Psoas muscle (tissue), 8 donors: ENCODE measurements at regions of chr6 and their contacts with region 1.

Region 1: GRCh38 chr6:593139-593906 is 63.6 kb downstream of the HUS1B start:
- DNase-seq: no peak
- ATAC-seq: peak; percentile 64 to 82 (median 66)
- H3K4me3 ChIP-seq: no peak overlapping the region
- H3K27ac ChIP-seq: no peak overlapping the region
- H3K4me1 ChIP-seq: no peaks in the 10 kb centered on the region
- H3K27me3 ChIP-seq: no peaks in the 10 kb centered on the region
- CTCF ChIP-seq: peak; percentile 80

Region 2: GRCh38 chr6:340991-341827 is 252.1 kb before region 1 on chr6:
- intact Hi-C with region 1: no loop called
- DNase-seq: peak in 1 of 2 donors; percentile 52
- ATAC-seq: peak in 1 of 4 donors; percentile 6
- H3K4me3 ChIP-seq: no peak overlapping the region
- H3K27ac ChIP-seq: no peak overlapping the region
- H3K4me1 ChIP-seq: peaks cover 21% of the 10 kb centered on the region
- H3K27me3 ChIP-seq: no peaks in the 10 kb centered on the region
- CTCF ChIP-seq: no peak

Region 3: GRCh38 chr6:474453-475185 is 118.7 kb before region 1 on chr6:
- intact Hi-C with region 1: no loop called
- DNase-seq: no peak
- ATAC-seq: no peak
- H3K4me3 ChIP-seq: no peak overlapping the region
- H3K27ac ChIP-seq: no peak overlapping the region
- H3K4me1 ChIP-seq: no peaks in the 10 kb centered on the region
- H3K27me3 ChIP-seq: no peaks in the 10 kb centered on the region
- CTCF ChIP-seq: no peak

Region 4: GRCh38 chr6:797479-798077 is 204.3 kb after region 1 on chr6:
- intact Hi-C with region 1: loop called in 1 of 2 experiments (anchors 5 kb)
- DNase-seq: no peak
- ATAC-seq: peak; percentile 68 to 82 (median 73)
- H3K4me3 ChIP-seq: no peak overlapping the region
- H3K27ac ChIP-seq: no peak overlapping the region
- H3K4me1 ChIP-seq: no peaks in the 10 kb centered on the region
- H3K27me3 ChIP-seq: peaks cover 2 to 12% (median 3%) of the 10 kb centered on the region in 3 donors
- CTCF ChIP-seq: peak; percentile 84

Region 5: GRCh38 chr6:1062786-1063545 is 469.6 kb after region 1 on chr6:
- intact Hi-C with region 1: no loop called
- DNase-seq: no peak
- ATAC-seq: no peak
- H3K4me3 ChIP-seq: no peak overlapping the region
- H3K27ac ChIP-seq: no peak overlapping the region
- H3K4me1 ChIP-seq: no peaks in the 10 kb centered on the region
- H3K27me3 ChIP-seq: no peaks in the 10 kb centered on the region
- CTCF ChIP-seq: no peak

Region 6: DNA sequence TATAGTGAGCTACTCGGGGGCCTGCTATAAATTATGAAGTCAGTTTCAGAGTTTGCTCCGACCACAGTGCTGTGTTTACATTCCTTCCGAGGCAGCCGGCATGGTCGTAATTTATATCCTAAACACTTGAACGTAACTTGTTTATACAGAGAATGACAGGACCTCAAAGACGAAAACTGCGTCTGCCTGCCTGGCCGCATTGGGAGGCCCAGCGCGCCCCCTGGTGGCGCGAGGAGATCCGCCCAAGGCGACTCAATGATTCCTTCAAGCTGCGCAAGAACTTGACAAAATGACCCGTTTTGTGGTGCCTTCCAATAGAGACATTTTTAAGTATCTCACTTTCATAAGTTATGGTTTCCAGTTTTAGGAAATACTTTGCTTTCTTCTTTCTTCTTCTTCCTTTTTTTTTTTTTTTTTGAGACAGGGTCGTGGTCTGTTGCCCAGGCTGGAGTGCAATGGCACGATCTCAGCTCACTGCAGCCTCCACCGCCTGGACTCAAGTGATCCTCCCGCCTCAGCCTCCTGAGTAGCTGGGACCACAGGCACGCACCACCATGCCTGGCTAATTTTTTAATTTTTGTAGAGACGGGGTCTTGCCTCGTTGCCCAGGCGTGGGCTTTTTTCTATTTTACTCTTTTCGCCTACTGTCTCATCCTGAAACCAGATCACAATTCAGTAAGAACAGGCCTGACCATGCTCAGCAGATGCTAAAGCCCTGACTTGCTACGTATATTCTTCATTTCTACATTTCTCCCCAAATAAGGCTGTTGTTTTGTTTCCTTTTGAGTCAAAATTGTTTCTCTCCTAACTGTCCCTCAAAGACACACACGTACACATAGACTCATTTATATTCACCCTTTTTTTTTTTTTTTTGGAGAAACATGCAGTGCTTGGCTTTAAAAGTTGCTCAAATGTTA is 803.9 kb after region 1 on chr6:
- intact Hi-C with region 1: loop called (anchors 2 to 5 kb)
- DNase-seq: peak; percentile 73 to 77
- ATAC-seq: peak in 3 of 4 donors; percentile 66 to 88 (median 72)
- H3K4me3 ChIP-seq: no peak overlapping the region
- H3K27ac ChIP-seq: no peak overlapping the region
- H3K4me1 ChIP-seq: no peaks in the 10 kb centered on the region
- H3K27me3 ChIP-seq: peaks cover 0 to 89% (median 30%) of the 10 kb centered on the region in 3 donors
- CTCF ChIP-seq: peak; percentile 92